GM10248 (cell line): ENCODE measurements at regions of chr22 and their contacts with region 1.

Region 1: DNA sequence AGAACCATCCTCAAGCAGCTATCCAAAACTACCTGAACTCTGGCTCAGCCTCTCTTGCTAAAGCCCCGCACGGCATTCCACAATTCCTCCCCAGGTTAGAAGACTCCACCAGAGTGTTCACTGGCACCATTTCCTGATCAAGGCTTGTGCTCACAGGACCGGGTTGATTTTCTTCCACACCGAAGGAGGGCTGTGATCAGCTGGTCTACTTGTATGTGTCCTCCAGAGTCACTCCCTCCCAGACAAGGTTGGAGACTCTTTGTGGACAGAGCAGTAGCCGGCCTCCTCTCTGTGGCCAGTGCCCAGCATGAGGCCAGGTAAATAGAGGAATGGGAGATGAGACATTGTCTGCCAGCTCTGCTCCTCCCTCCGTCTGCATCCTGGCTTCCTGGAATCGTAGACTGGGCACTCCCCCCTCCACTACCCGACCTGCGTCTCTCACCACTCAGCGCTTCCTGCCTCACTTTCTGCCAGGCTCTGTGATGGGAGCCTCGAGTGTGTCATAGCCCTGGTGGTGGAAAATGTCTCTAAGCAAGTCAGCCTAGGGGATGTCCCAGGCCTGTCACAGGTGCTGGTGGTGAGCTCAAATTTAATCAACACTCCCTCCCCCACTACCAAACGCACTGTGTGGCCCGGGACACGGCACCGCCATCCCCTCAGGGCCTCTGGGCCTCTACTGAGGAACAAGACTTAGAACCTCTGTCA is 12.5 kb upstream of the TMPRSS6 start:
- DNase-seq: peak; percentile 90
- CTCF ChIP-seq: no peak

Region 2: DNA sequence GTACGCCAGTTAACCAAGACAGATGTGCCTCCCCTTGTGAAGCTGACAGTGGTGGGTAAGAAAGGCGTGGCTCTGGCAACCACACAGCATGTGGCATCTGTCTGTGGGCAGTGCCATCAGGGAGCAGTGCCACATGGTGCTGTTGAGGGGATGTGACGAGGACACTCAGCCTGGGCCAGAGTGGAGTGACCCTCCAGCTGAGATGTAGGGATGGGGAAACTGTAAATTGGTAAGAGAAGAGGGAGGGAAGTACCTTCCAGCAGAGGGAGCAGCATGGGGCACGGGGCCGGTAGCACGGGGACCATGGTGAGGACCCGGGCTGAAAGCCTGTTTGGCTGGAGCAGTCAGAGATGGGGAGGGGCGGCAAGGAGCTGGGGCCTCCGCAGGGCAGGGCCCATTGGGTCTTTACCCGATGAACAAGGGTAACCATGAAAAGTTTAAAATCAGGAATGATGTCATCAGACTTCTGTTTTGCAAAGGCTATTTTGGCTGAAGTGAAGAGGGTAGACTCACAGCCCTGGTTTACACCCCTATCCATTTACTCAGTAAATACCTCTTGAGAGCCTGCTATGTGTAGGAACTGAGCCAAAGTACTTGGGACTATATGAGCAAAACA is 23.0 kb before region 1 on chr22:
- CTCF ChIA-PET with region 1: interaction called, 12 read pairs
- POLR2A ChIA-PET with region 1: no interaction called
- DNase-seq: no peak
- CTCF ChIP-seq: peak; percentile 15

Region 3: DNA sequence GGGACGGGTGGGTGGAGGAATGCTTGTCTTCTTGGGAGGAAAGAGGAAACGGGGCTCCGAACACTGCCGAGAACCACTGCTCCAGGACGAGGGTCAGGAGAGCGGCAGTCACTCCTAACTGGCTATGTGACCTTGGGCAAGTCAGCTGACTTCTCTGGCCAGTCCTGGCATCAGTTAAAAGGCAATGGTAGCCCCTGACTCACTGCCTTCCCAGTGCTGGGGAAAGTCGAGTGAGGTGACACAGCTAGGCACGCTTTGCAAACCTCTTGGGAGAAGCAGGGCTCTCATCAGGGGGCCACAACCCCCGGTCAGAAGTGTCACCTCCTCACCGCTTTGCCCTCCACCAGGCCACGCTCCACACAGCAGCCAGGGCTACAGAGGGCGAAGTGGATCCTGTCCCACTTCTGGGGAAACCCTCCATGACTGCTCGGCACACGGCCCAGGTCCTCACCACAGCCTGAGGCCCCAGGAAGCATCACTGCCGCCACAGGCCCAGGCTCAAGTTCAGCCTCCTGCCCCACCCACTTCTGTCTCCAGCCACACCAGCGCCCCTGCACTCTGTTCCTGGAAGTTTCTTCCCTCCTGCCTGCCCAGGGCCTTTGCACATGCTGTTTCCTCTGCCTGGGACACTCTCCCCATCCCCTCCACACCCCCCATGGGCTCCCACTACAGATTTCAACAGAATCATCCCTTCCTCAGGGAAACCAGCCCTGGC is 11.4 kb after region 1 on chr22:
- CTCF ChIA-PET with region 1: interaction called, 15 read pairs
- POLR2A ChIA-PET with region 1: interaction called, 6 read pairs
- DNase-seq: no peak
- CTCF ChIP-seq: no peak

Region 4: DNA sequence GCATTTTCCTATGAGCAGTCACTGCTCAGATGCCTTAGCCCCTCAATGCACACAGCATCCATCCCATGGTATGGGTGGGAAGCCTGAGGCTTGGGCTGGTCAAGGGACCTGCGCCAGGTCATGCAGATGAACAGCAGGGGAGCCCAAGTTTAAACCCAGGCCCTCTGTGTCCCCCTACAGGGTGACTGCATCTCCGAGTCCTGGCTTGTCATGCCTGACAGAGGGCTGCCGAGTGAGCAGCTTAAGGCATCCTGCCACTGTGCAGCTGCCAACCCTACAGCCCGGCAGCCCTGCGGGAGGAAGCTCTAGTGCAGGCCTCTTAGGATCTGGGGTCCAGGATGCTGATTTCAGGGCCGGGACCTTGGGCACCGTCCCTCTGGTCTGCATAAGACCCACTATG is 17.7 kb after region 1 on chr22:
- CTCF ChIA-PET with region 1: interaction called, 37 read pairs
- POLR2A ChIA-PET with region 1: interaction called, 3 read pairs
- DNase-seq: peak; percentile 41
- CTCF ChIP-seq: no peak

Region 5: GRCh38 chr22:37148742-37149665 is 27.0 kb after region 1 on chr22:
- CTCF ChIA-PET with region 1: interaction called, 25 read pairs
- POLR2A ChIA-PET with region 1: interaction called, 4 read pairs
- DNase-seq: no peak
- CTCF ChIP-seq: no peak